Dendritic cell treated with granulocyte-macrophage colony-stimulating factor and Interleukin-4, amounts not matched to agents 40 ng/mL and 50 ng/mL, for 4 days (primary cell): ENCODE measurements at regions of chr1 and their contacts with region 1.

Region 1: GRCh38 chr1:94335950-94336349 is 82.2 kb upstream of the ABCD3 start:
- H3K4me3 Mint-ChIP-seq: no peak overlapping the region
- H3K27ac Mint-ChIP-seq: no peak overlapping the region
- H3K4me1 Mint-ChIP-seq: peaks cover 25% of the 10 kb centered on the region
- H3K27me3 Mint-ChIP-seq: peaks cover 8% of the 10 kb centered on the region

Region 2: DNA sequence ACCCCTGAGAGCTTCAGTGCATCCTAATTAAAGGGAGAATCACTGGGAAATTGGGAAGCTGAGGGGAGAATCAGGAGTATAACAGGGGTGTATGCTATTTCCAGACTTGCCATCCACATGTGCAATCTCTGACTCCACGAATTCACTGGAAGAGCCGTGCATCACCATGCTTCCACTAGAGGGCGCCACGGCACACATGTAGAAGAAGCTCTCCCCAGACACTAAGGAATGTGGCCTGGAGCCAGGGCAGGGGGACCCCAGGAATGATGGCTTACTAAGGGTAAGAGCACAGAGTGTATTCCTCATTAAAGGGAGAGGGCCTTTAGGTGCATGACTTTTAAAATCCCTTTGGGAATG is 296.5 kb before region 1 on chr1:
- intact Hi-C with region 1: loop called (anchors 1 kb)
- H3K4me3 Mint-ChIP-seq: no peak overlapping the region
- H3K27ac Mint-ChIP-seq: no peak overlapping the region
- H3K4me1 Mint-ChIP-seq: peaks cover 6% of the 10 kb centered on the region
- H3K27me3 Mint-ChIP-seq: peaks cover 43% of the 10 kb centered on the region

Region 3: GRCh38 chr1:94045465-94046056 is 290.4 kb before region 1 on chr1:
- intact Hi-C with region 1: loop called (anchors 1 kb)
- H3K4me3 Mint-ChIP-seq: peak overlapping the region; percentile 64
- H3K27ac Mint-ChIP-seq: no peak overlapping the region
- H3K4me1 Mint-ChIP-seq: peaks cover 14% of the 10 kb centered on the region
- H3K27me3 Mint-ChIP-seq: peaks cover 41% of the 10 kb centered on the region

Region 4: DNA sequence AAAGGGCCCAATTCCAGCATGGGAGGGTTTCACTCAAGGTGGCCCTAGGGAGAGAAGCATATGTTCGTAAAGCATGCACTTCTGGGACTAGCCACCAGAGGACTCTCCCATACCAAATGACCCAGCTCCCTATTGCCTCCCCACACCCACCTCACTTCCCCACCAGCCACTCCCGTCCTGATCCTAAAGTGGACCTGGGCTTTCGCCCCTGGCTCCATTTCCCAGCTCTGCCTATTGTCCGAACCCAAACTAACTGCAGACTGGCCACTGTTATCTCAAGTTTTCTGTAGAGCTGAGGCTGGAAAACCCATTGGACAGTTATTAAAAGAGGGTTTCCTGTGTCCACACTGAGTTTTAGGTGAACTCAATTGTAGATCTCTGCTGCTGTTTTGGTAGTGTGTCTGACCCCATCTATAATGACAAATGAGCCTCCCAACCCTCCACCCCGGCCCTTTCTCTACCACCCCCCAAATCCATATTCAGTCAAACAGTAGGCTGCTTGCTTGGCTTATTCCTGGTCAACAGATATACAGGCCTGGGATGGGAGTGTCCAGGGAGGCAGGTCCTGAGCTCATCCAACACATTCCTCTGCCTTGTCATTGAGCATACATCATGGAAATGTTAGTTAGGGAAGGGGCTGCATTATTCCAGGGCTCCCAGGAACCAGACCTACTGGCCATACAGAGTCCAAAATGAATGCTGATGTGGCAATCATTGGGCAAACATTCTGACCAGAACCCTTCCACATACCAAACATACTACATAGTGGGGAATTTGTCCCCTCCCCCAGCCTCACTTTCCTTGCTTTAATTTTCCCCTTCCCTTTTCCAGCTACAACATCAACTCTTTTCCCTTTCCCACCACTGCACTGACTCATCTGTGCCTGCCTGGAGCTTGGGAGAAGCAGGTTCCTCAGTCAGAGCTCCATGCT is 274.2 kb before region 1 on chr1:
- intact Hi-C with region 1: loop called (anchors 1 kb)
- H3K4me3 Mint-ChIP-seq: no peak overlapping the region
- H3K27ac Mint-ChIP-seq: no peak overlapping the region
- H3K4me1 Mint-ChIP-seq: peaks cover 9% of the 10 kb centered on the region
- H3K27me3 Mint-ChIP-seq: peaks cover 67% of the 10 kb centered on the region